ENCODE measurements at regions of chr1 and their contacts with region 1.

Region 1: DNA sequence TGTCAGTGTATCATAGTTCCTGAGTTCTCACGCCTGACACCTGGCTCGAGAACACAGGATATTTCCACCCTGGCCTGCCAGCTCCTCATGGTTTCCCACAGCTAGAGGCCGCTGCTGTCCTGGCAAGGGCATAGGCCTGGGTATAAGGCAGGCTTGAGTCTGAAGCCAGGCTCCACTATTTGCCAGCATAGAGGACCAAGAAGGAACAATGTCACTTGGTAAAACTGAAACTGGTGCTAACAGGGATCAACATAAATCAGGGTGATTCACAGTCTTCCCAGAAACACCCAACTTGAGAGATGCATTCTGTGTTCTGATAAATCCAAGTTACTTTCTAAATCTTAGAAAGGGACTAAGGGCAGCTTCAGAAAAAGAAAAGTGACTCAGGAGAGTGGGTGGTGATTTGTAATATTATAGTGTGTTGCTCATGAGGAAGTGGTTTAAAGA is 6.9 kb upstream of the S100A2 start:
- DNase-seq: peak; percentile 85
- H3K4me3 Mint-ChIP-seq: no peak overlapping the region
- H3K27ac Mint-ChIP-seq: peak overlapping the region; percentile 18
- H3K4me1 Mint-ChIP-seq: peaks cover 40% of the 10 kb centered on the region
- H3K27me3 Mint-ChIP-seq: peaks cover 1% of the 10 kb centered on the region

Region 2: GRCh38 chr1:153352523-153352922 is 220.1 kb before region 1 on chr1:
- CTCF ChIA-PET with region 1: interaction called, 3 read pairs
- intact Hi-C with region 1: loop called (anchors 2 kb)
- DNase-seq: peak; percentile 83
- H3K4me3 Mint-ChIP-seq: no peak overlapping the region
- H3K27ac Mint-ChIP-seq: no peak overlapping the region
- H3K4me1 Mint-ChIP-seq: peaks cover 11% of the 10 kb centered on the region
- H3K27me3 Mint-ChIP-seq: peaks cover 5% of the 10 kb centered on the region

Region 3: DNA sequence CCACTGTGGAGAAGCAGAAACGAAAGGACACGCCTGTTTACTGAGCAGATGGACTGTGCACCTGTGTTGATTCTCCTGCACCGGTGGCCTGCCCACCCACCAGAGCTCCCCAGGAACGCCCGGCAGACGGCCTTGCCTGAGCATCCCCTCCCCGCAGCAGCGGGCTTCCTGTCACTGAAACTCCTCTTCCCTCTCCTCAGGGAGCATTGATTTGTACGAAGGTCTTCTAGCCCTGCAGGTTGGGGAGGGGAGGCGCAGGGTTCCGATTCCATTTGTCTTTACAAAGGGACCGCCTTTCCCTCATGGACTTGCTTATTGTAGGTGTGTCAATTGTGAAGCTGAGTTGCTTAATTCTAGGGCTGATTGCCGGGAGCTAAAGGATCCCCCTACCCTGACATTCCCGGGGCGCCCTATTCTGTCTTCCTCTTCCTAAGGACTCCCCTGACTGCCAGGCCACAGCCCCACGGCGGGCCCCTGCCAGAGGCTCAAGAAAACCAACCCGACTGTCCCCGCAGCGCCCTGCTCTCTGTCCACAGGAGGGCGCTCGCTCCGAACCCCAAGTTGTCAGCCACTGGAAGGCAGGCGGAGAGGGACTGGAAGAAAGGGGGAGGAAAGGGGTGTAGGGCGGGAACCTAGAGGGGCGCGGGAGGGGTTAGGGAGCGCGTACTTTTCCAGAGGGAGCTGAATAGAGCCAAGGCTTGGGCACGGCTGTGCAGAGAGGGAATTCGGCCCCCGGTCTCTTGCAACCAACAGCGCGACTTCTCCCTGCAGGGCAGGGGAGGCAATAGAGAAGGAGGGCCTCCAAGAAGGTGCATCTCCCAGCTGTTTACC is 39.6 kb before region 1 on chr1:
- CTCF ChIA-PET with region 1: interaction called, 207 read pairs
- intact Hi-C with region 1: loop called (anchors 1 kb)
- DNase-seq: peak; percentile 90
- H3K4me3 Mint-ChIP-seq: peak overlapping the region; percentile 51
- H3K27ac Mint-ChIP-seq: peak overlapping the region; percentile 96
- H3K4me1 Mint-ChIP-seq: peaks cover 54% of the 10 kb centered on the region
- H3K27me3 Mint-ChIP-seq: no peaks in the 10 kb centered on the region

Region 4: DNA sequence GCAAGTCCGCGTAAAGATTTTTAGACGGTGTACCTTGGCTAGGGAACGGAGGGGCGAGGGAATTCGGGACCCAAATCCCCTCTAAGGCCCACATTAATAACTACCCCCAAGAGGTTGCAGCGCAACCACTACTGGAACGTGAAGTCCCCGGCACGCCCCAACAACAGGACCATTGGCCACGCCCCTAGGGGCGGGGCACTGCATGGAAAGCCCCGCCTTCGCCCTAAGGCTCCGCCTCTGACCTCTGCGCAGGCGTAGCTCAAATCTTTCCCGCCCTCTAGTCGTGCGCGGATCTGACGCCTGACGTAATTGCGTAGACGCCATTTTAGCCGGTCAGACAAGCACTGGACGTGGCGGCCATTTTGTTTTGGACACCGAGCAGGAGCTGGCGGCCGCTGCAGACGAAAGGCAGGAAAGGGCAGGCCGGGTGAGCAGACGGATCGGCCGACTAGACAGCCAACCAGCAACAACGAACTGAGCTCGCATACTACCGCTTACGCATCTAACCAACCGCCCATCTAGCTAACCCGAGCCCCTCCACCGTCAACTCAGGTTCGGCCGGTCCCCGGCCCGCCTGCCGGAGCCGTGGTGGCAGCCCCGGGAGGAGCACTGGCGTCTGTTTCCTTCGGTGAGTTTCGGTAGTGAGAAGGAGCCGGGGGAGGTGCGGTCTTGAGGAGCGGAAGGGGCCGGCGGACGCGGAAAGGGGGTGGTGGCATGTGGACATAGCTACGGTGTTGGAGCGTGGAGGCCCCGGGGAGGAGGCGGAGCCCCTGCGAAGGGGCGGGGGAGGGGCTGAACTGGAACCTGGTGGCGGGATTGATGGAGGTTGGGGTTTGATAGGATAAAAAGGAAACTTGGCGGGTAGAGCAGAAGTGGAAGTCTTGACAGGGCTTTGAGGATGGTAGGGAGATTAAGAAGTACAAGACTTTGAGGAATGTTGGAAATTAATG is 61.4 kb after region 1 on chr1 and contains the start of gene CHTOP:
- CTCF ChIA-PET with region 1: interaction called, 12 read pairs
- intact Hi-C with region 1: loop called (anchors 1 kb)
- DNase-seq: peak; percentile 98
- H3K4me3 Mint-ChIP-seq: peak within 1 kb of the TSS; percentile 90
- H3K27ac Mint-ChIP-seq: peak within 1 kb of the TSS; percentile 100
- H3K4me1 Mint-ChIP-seq: peaks cover 45% of the 10 kb centered on the region
- H3K27me3 Mint-ChIP-seq: no peaks in the 10 kb centered on the region
- total RNA-seq, gene CHTOP: 88.2 to 91.3 TPM

Region 5: GRCh38 chr1:153749408-153750005 is 176.9 kb after region 1 on chr1:
- CTCF ChIA-PET with region 1: no interaction called
- intact Hi-C with region 1: loop called (anchors 1 kb)
- DNase-seq: peak; percentile 90
- H3K4me3 Mint-ChIP-seq: no peak overlapping the region
- H3K27ac Mint-ChIP-seq: no peak overlapping the region
- H3K4me1 Mint-ChIP-seq: peaks cover 2% of the 10 kb centered on the region
- H3K27me3 Mint-ChIP-seq: no peaks in the 10 kb centered on the region

Measured in activated naive CD4-positive, alpha-beta T cell treated with anti-CD3 and anti-CD28 coated beads for 36 hours (primary cell).